Caco-2 (cell line): ENCODE measurements at regions of chr10 and their contacts with region 1.

Region 1: DNA sequence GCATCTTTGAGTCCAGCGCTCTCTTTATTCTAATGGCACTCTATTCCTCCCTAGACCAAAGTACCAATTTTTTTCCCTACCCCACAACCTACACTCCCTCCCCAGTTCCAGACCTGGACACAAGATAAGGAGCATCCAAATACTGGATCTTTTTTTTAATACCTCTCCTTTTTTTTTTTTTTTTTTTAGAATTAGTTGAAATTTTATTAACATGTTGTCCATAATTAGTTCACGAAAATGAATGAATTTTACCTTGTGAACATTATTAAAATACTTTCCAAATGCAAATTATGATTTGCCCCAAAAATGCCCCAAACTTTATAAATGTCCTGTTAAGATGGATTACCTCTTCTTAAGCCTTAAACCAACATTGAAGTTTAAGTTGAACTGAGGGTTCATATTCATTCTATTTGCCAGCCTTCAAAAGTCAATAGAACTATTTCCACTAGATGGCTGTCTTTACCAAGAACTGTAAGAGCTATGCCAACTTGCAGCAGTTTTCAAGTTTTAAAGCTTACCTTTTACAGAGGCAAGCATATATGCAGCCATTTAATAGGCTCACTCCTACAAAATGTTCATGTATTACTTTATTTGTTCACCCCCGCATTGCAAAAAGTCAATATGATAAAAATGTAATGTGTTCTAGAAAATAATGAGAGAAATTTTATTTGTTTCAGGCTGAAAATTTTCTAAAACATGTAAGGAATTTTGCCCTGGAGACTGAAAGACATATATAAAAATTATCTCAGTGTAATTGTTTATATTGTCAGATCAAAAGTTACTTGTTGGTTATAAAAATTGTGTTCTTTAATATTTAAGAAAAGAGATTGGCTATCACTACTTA is 39.7 kb upstream of the TNKS2 start:
- DNase-seq: peak in 1 of 2 experiments; percentile 21
- H3K4me3 ChIP-seq: no peak overlapping the region
- H3K4me3 Mint-ChIP-seq: no peak overlapping the region
- H3K27ac Mint-ChIP-seq: no peak overlapping the region
- H3K4me1 ChIP-seq: no peaks in the 10 kb centered on the region
- H3K4me1 Mint-ChIP-seq: no peaks in the 10 kb centered on the region
- H3K27me3 ChIP-seq: no peaks in the 10 kb centered on the region
- H3K27me3 Mint-ChIP-seq: peaks cover 9% of the 10 kb centered on the region
- CTCF ChIP-seq: peak; percentile 49 to 52

Region 2: DNA sequence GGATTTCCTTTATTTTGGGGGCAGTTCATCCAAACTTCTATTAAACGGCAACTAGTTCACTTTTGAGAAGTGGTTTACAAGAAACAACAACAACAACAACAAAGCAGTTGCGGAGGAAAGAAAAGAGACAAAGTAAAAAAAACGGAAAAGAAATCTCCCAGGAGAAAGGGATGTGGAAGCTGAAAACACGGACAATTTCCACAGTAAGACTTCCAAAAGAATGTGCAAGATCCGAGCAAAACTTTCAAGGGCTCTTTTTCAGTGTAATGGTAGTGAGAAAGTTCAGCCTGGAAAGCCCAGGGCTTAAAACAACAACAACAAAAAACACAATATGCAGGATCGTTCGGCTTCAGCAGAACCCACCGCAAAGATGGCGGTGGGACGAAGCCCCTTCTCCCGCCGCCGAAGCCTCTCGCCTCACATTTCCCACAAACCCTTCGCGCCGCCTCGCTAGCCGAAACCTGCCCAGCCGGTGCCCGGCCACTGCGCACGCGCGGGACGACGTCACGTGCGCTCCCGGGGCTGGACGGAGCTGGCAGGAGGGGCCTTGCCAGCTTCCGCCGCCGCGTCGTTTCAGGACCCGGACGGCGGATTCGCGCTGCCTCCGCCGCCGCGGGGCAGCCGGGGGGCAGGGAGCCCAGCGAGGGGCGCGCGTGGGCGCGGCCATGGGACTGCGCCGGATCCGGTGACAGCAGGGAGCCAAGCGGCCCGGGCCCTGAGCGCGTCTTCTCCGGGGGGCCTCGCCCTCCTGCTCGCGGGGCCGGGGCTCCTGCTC is 39.5 kb after region 1 on chr10 and contains the start of gene TNKS2:
- CTCF ChIA-PET with region 1: interaction called, 5 read pairs
- POLR2A ChIA-PET with region 1: no interaction called
- intact Hi-C with region 1: loop called (anchors 2 kb)
- DNase-seq: peak; percentile 95 to 98
- H3K4me3 ChIP-seq: peak within 1 kb of the TSS; percentile 98
- H3K4me3 Mint-ChIP-seq: peak within 1 kb of the TSS; percentile 96
- H3K27ac Mint-ChIP-seq: peak within 1 kb of the TSS; percentile 97
- H3K4me1 ChIP-seq: peaks cover 24% of the 10 kb centered on the region
- H3K4me1 Mint-ChIP-seq: peaks cover 37% of the 10 kb centered on the region
- H3K27me3 ChIP-seq: no peaks in the 10 kb centered on the region
- H3K27me3 Mint-ChIP-seq: no peaks in the 10 kb centered on the region
- CTCF ChIP-seq: no peak
- total RNA-seq, gene TNKS2: 46.7 and 48.5 TPM in 2 replicates

Region 3: GRCh38 chr10:91813251-91813650 is 54.7 kb after region 1 on chr10:
- CTCF ChIA-PET with region 1: interaction called, 8 read pairs
- POLR2A ChIA-PET with region 1: interaction called, 3 read pairs
- intact Hi-C with region 1: loop called (anchors 5 kb)
- DNase-seq: no peak
- H3K4me3 ChIP-seq: no peak overlapping the region
- H3K4me3 Mint-ChIP-seq: no peak overlapping the region
- H3K27ac Mint-ChIP-seq: no peak overlapping the region
- H3K4me1 ChIP-seq: peaks cover 23% of the 10 kb centered on the region
- H3K4me1 Mint-ChIP-seq: peaks cover 24% of the 10 kb centered on the region
- H3K27me3 ChIP-seq: no peaks in the 10 kb centered on the region
- H3K27me3 Mint-ChIP-seq: no peaks in the 10 kb centered on the region
- CTCF ChIP-seq: no peak

Region 4: DNA sequence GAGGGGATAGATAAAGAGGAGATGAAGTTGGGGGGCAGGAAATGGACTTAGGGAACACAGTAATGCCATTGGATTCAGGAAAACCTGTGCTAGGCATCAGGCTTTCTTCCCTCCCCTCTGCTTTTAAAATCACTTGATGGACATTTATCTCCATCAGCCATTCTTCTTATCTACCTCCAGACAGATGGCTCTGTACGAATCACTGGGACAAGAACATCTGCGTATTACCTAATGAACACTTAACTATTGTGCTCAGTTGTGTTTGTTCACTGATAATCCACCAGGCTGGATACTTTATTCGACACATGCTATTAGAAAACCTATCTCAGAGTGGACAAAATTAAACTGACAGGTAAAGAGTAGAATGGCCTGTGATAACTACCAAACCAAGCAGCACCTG is 79.7 kb after region 1 on chr10:
- CTCF ChIA-PET with region 1: no interaction called
- POLR2A ChIA-PET with region 1: no interaction called
- intact Hi-C with region 1: loop called (anchors 5 kb)
- DNase-seq: no peak
- H3K4me3 ChIP-seq: no peak overlapping the region
- H3K4me3 Mint-ChIP-seq: no peak overlapping the region
- H3K27ac Mint-ChIP-seq: no peak overlapping the region
- H3K4me1 ChIP-seq: no peaks in the 10 kb centered on the region
- H3K4me1 Mint-ChIP-seq: no peaks in the 10 kb centered on the region
- H3K27me3 ChIP-seq: no peaks in the 10 kb centered on the region
- H3K27me3 Mint-ChIP-seq: no peaks in the 10 kb centered on the region
- CTCF ChIP-seq: no peak

Region 5: GRCh38 chr10:91856637-91857036 is 98.1 kb after region 1 on chr10:
- CTCF ChIA-PET with region 1: no interaction called
- POLR2A ChIA-PET with region 1: no interaction called
- intact Hi-C with region 1: loop called (anchors 2 kb)
- DNase-seq: peak in 1 of 2 experiments; percentile 33
- H3K4me3 ChIP-seq: no peak overlapping the region
- H3K4me3 Mint-ChIP-seq: no peak overlapping the region
- H3K27ac Mint-ChIP-seq: no peak overlapping the region
- H3K4me1 ChIP-seq: no peaks in the 10 kb centered on the region
- H3K4me1 Mint-ChIP-seq: no peaks in the 10 kb centered on the region
- H3K27me3 ChIP-seq: no peaks in the 10 kb centered on the region
- H3K27me3 Mint-ChIP-seq: no peaks in the 10 kb centered on the region
- CTCF ChIP-seq: peak; percentile 37 to 77

Region 6: GRCh38 chr10:91908337-91909116 is 150.0 kb after region 1 on chr10:
- CTCF ChIA-PET with region 1: interaction called, 8 read pairs
- POLR2A ChIA-PET with region 1: no interaction called
- intact Hi-C with region 1: loop called (anchors 1 kb)
- DNase-seq: peak; percentile 90 to 91
- H3K4me3 ChIP-seq: peak overlapping the region; percentile 91
- H3K4me3 Mint-ChIP-seq: peak overlapping the region; percentile 85
- H3K27ac Mint-ChIP-seq: peak overlapping the region; percentile 82
- H3K4me1 ChIP-seq: peaks cover 5% of the 10 kb centered on the region; the same call in 1 of the 2 replicates
- H3K4me1 Mint-ChIP-seq: peaks cover 12% of the 10 kb centered on the region
- H3K27me3 ChIP-seq: no peaks in the 10 kb centered on the region
- H3K27me3 Mint-ChIP-seq: peaks cover 2% of the 10 kb centered on the region
- CTCF ChIP-seq: peak in 1 of 2 experiments; percentile 82

Region 7: DNA sequence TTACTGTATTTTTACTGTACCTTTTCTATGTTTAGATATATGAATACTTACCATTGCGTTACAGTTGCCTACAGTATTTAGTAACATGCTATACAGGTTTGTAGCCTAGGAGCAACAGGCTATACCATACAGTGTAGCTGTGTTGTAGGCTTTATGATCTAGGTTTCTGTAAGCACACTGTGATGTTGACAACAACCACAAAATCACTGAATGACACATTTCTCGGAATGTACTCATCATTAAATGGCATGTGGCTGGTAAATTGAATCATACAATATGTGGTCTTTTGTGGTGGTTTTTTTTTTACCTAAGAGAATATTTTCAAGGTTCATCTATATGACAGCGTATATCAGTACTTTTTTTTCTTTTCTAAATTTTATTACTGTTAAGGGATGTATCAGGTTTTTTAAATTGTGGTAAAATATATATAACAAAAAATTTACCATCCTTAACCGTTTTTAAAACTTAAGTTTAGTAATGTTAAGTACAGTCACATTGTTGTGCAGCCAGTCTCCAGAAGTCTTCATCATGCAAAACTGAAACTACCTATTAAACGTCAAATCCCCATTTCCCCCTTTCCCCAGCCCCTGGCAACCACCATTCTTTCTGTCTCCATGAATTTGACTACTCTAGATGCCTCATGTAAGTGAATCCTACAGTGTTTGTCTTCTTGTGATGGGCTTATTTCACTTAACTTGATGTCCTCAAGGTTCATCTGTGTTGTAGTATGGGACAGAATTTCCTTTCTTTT is 186.5 kb after region 1 on chr10:
- CTCF ChIA-PET with region 1: no interaction called
- POLR2A ChIA-PET with region 1: no interaction called
- intact Hi-C with region 1: no loop called
- DNase-seq: no peak
- H3K4me3 ChIP-seq: no peak overlapping the region
- H3K4me3 Mint-ChIP-seq: no peak overlapping the region
- H3K27ac Mint-ChIP-seq: no peak overlapping the region
- H3K4me1 ChIP-seq: no peaks in the 10 kb centered on the region
- H3K4me1 Mint-ChIP-seq: no peaks in the 10 kb centered on the region
- H3K27me3 ChIP-seq: no peaks in the 10 kb centered on the region
- H3K27me3 Mint-ChIP-seq: no peaks in the 10 kb centered on the region
- CTCF ChIP-seq: no peak